GM12878 (cell line): ENCODE measurements at regions of chr10 and their contacts with region 1.

Region 1: DNA sequence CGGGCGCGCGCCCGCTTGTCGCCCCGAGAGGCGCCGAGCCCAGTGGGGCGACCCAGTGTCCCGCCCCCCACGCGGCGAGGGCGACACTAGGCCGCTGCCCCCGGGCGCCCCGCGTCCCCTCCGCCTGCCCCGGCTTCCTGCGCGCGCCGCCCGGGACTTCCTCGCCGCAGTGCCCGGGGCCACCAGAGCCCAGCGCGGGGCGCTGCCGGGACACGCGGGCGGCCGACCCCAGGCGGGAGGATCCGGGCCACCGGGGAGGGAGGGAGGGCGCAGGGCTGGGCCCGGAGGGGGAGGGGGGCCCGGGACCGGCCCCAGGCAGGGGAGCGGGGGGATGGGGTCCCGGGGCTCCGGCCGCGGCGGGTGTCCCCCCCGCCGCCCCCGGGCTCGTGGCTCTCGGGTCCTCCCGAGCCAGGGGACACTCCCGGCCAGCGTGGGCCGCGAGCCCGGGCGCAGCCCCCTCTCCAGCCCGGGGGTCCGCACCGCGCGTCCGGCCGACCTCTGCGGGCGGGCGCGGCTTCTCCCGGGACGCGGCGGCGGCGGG is 435 bp upstream of the PWWP2B start:
- DNase-seq: no peak
- ATAC-seq: peak; percentile 62
- H3K4me3 ChIP-seq: no peak overlapping the region
- H3K27ac ChIP-seq: no peak overlapping the region
- H3K4me1 ChIP-seq: peaks cover 8% of the 10 kb centered on the region; the same call in 1 of the 2 replicates
- H3K27me3 ChIP-seq: peaks cover 0 to 3% of the 10 kb centered on the region in 2 experiments; a peak in 3 of 4 replicates
- CTCF ChIP-seq: peak in 2 of 3 experiments; percentile 18 to 29; a peak in 2 of 6 replicates
- EP300 ChIP-seq: no peak
- POLR2A ChIP-seq: no peak
- RAD21 ChIP-seq: no peak

Region 2: DNA sequence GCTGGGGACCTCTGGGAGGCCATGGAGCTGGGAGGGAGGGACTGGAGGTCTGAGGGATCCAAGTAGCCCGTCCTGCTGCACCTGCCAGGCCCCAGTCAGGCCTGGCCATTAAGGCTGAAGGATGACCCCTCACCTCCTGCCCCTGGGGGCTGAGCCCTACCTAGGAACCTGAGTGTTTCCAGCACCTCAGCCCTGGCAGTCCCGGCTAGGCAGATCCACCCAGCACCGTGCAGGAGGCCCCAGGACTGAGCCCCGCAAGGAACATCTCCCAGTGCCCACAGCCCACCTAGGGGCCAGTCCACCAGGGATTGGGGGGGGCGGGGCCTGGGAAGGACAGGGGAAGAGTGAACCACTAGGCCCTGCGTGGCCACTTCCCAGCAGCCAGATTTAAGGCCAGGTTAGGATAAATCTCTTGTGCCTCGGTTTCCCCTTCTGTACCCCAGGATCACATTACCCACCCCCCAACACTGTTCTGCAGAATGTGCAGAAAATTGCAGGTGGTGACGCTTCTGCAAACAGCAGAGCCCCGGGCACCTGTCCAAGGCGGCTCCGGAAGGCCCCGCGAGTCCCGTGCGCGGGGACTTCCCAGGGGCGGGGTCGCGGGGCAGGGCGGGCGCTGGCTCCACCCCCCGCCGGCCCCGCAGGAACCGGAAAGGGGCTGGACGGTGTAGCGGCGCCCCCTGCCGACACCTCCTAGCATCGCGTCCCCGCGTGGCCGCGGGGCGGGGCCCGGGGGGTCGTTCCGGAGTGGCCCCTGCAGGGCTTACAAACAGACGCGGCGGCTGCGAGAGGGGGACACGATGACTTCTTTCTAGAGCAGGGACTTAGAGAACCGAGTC is 56.3 kb after region 1 on chr10:
- CTCF ChIA-PET with region 1: no interaction called
- POLR2A ChIA-PET with region 1: no interaction called
- RAD21 ChIA-PET with region 1: no interaction called
- SMC1A ChIA-PET with region 1: interaction called, 3 read pairs
- in situ Hi-C with region 1: no loop called
- intact Hi-C with region 1: loop called (anchors 5 kb)
- DNase-seq: no peak
- ATAC-seq: peak; percentile 94
- H3K4me3 ChIP-seq: no peak overlapping the region
- H3K27ac ChIP-seq: peak overlapping the region; percentile 3; the same call in 1 of the 2 replicates
- H3K4me1 ChIP-seq: peaks cover 12% of the 10 kb centered on the region
- H3K27me3 ChIP-seq: no peaks in the 10 kb centered on the region
- CTCF ChIP-seq: peak; percentile 81 to 97 (median 88)
- EP300 ChIP-seq: no peak
- POLR2A ChIP-seq: no peak
- RAD21 ChIP-seq: peak; percentile 85